Activated T-helper 1 cell treated with anti-CD3 and anti-CD28 coated beads, Interleukin-12 subunit alpha, Interleukin-12 subunit beta, Interleukin-2, Interleukin-4 antibody, amounts not matched to agents 30 ng/mL and 10 ng/mL and 1 ng/mL, durations not matched to agents 14 hours and 24 hours and 36 hours (primary cell): ENCODE measurements at regions of chr6 and their contacts with region 1.

Region 1: DNA sequence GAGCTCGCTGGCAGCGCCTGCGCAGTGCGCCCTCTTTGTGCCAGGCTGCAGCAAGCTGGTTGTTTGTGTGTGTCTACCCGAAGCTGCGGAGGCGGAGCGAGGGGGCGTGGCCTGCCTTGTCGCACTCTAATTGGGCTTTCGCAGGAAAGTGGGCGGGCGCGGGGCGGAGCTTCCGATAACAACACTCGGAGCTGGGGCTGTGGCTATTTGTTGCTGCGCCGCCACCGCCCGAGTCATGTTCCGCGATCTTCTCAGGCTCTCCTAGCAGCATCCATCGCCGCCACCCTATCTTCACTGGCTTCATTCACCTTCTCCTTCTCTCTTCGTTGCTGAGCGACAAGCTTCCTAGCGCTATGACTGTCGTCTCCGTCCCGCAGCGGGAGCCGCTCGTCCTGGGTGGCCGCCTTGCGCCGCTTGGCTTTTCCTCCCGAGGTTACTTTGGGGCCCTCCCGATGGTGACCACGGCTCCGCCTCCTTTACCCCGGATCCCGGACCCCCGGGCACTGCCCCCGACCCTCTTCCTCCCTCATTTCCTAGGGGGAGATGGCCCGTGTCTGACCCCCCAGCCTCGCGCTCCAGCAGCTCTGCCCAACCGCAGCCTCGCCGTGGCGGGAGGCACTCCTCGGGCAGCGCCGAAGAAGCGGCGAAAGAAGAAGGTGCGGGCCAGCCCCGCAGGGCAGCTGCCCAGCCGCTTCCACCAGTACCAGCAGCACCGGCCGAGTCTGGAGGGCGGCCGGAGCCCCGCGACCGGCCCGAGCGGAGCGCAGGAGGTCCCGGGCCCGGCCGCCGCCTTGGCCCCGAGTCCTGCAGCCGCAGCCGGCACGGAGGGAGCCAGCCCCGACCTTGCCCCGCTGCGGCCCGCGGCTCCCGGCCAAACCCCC is at the start of gene PNRC1:
- DNase-seq: peak; percentile 99
- H3K4me3 Mint-ChIP-seq: peak within 1 kb of the TSS; percentile 95
- H3K27ac Mint-ChIP-seq: peak within 1 kb of the TSS; percentile 98
- H3K4me1 Mint-ChIP-seq: peaks cover 39% of the 10 kb centered on the region
- H3K27me3 Mint-ChIP-seq: no peaks in the 10 kb centered on the region
- total RNA-seq, gene PNRC1: 45.6 and 47.6 TPM in 2 replicates

Region 2: GRCh38 chr6:87154993-87155841 is 1925.6 kb before region 1 on chr6 and contains the start of gene ZNF292:
- intact Hi-C with region 1: loop called (anchors 2 kb)
- DNase-seq: peak; percentile 97
- H3K4me3 Mint-ChIP-seq: peak within 1 kb of the TSS; percentile 93
- H3K27ac Mint-ChIP-seq: peak within 1 kb of the TSS; percentile 98
- H3K4me1 Mint-ChIP-seq: peaks cover 50% of the 10 kb centered on the region
- H3K27me3 Mint-ChIP-seq: no peaks in the 10 kb centered on the region
- total RNA-seq, gene ZNF292: 50.1 and 51.7 TPM in 2 replicates

Region 3: GRCh38 chr6:89098461-89098860 is 17.7 kb after region 1 on chr6:
- intact Hi-C with region 1: loop called (anchors 1 kb)
- DNase-seq: no peak
- H3K4me3 Mint-ChIP-seq: no peak overlapping the region
- H3K27ac Mint-ChIP-seq: no peak overlapping the region
- H3K4me1 Mint-ChIP-seq: peaks cover 7% of the 10 kb centered on the region
- H3K27me3 Mint-ChIP-seq: no peaks in the 10 kb centered on the region

Region 4: GRCh38 chr6:89297695-89298351 is 217.0 kb after region 1 on chr6:
- intact Hi-C with region 1: loop called (anchors 1 kb)
- DNase-seq: peak; percentile 64
- H3K4me3 Mint-ChIP-seq: peak overlapping the region; percentile 43
- H3K27ac Mint-ChIP-seq: peak overlapping the region; percentile 97
- H3K4me1 Mint-ChIP-seq: peaks cover 28% of the 10 kb centered on the region
- H3K27me3 Mint-ChIP-seq: peaks cover 2% of the 10 kb centered on the region

Region 5: GRCh38 chr6:89371849-89372505 is 291.2 kb after region 1 on chr6:
- intact Hi-C with region 1: loop called (anchors 5 kb)
- DNase-seq: peak; percentile 75
- H3K4me3 Mint-ChIP-seq: peak overlapping the region; percentile 49
- H3K27ac Mint-ChIP-seq: peak overlapping the region; percentile 59
- H3K4me1 Mint-ChIP-seq: peaks cover 46% of the 10 kb centered on the region
- H3K27me3 Mint-ChIP-seq: no peaks in the 10 kb centered on the region

Region 6: DNA sequence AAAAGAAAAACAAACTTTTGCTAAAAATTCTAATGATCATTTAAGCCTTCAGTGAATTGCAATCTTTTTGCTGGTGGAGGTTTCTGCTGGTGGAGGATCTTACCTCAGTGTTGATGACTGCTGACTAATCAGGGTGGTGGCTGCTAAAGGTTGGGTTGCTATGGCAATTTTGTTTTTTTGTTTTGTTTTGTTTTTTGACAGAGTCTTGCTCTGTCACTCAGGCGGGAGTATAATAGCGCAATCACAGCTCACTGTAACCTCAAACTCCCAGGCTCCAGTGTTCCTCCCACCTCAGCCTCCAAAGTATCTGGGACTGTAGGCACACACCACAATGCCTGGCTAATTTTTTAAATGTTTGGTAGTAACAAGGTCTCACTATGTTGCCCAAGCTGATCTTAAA is 446.9 kb after region 1 on chr6:
- intact Hi-C with region 1: no loop called
- DNase-seq: no peak
- H3K4me3 Mint-ChIP-seq: no peak overlapping the region
- H3K27ac Mint-ChIP-seq: no peak overlapping the region
- H3K4me1 Mint-ChIP-seq: peaks cover 4% of the 10 kb centered on the region
- H3K27me3 Mint-ChIP-seq: peaks cover 6% of the 10 kb centered on the region

Region 7: DNA sequence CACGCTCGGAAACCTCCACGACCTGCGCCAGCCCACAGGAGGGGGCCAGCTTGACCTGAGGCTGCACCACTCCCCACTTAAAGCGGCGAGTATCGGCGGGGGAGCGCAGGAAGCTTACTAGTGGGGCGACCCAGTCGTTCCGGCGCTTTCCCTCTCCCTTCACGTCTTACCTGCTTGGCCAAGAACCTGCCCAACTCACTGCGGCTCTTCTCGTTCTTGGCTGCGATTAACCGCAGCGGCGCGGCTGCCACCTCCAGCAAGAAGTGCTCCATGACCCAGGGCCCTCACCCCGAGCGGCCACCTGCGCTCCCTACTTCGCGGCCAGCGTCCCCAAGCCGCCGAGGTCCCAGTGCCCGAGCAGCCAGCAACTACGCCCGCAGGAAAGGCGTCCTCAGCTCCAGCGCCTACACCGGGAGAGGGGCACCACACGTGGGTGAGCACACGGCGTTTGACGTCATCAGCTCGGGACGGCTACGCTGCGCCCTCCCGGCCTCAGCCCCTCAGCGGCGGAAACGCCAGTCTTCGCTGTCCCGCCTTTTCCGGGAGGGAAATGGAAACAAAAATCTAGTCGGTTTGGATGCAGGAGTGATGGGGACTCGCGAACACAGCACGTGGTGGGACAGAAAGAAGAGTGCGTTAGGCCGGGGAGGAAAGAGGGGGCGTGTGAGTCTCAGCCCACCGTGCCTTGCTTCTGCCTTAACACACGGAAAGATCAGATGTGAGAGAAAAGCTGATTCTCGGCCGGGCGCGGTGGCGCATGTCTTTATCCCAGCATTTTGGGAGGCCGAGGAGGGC is 738.8 kb after region 1 on chr6 and contains the start of gene MDN1:
- intact Hi-C with region 1: loop called (anchors 1 kb)
- DNase-seq: peak; percentile 89
- H3K4me3 Mint-ChIP-seq: peak within 1 kb of the TSS; percentile 87
- H3K27ac Mint-ChIP-seq: peak within 1 kb of the TSS; percentile 97
- H3K4me1 Mint-ChIP-seq: peaks cover 33% of the 10 kb centered on the region
- H3K27me3 Mint-ChIP-seq: no peaks in the 10 kb centered on the region
- total RNA-seq, gene MDN1: 74.6 and 77.9 TPM in 2 replicates